ENCODE measurements at regions of chr17 and their contacts with region 1.

Region 1: GRCh38 chr17:33725675-33726271 is 432.7 kb upstream of the ASIC2 start:
- DNase-seq: peak; percentile 36 to 88
- H3K4me3 ChIP-seq: no peak overlapping the region
- H3K27ac ChIP-seq: no peak overlapping the region
- H3K4me1 ChIP-seq: no peaks in the 10 kb centered on the region
- H3K27me3 ChIP-seq: no peaks in the 10 kb centered on the region; a peak in 1 of 7 replicates
- CTCF ChIP-seq: peak; percentile 83 to 96 (median 91)
- EP300 ChIP-seq: no peak
- POLR2A ChIP-seq: no peak
- RAD21 ChIP-seq: peak; percentile 94 to 97

Region 2: DNA sequence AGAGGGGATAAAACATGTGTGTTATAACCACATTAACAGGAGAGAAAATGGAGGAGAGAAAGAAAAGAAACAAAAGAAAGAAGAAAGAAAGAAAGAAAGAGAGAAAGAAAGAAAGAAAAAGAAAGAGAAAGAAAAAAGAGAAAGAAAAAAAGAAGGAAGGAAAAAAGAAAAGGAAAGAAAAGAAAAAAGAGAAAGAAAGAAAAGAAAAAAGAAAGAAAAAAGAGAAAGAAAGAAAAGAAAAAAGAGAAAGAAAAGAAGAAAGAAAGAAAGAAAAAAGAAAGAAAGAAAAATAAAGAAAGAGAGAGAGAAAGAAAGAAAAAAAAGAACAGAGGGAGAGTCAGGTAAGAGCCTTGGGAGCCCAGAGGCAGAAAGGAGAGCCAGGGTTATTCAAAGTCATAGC is 13.9 kb after region 1 on chr17:
- CTCF ChIA-PET with region 1: interaction called, 34 read pairs
- POLR2A ChIA-PET with region 1: no interaction called
- DNase-seq: no peak
- H3K4me3 ChIP-seq: no peak overlapping the region
- H3K27ac ChIP-seq: no peak overlapping the region
- H3K4me1 ChIP-seq: no peaks in the 10 kb centered on the region
- H3K27me3 ChIP-seq: no peaks in the 10 kb centered on the region; a peak in 2 of 7 replicates
- CTCF ChIP-seq: no peak
- EP300 ChIP-seq: no peak
- POLR2A ChIP-seq: no peak
- RAD21 ChIP-seq: no peak

Region 3: DNA sequence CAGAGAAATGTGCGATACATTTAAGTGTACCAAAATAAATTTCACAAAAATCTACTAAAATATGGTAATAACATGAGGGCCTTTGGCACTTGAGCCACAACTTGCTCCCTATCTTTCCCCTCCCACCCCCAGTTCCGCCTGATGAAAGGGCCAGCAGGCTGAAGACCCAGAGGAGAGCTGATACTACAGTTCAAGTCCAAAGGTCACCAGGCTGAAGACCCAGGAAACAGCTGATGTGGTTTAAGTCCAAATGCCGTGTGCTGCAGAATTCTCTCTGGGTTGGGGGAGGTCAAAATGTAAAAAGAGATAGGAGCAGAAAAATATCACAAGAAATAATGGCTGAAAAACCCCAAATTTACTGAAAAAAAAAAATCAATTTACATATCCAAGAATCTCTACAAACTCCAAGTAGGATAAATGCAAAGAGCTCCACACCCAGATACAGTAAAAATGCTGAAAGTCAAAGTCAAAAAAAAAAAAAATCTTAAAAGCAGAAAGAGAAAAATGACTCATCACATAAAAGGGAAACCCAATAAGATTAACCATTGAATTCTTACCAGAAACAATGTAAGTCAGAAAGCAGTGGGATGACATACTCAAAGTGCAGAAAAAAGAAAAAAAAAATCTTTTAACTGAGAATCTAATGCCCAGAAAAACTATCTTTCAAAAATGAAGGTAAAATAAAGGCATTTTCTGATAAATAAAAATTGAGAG is 19.4 kb after region 1 on chr17:
- CTCF ChIA-PET with region 1: interaction called, 52 read pairs
- POLR2A ChIA-PET with region 1: no interaction called
- DNase-seq: no peak
- H3K4me3 ChIP-seq: no peak overlapping the region
- H3K27ac ChIP-seq: no peak overlapping the region
- H3K4me1 ChIP-seq: peaks cover 3 to 5% (median 4%) of the 10 kb centered on the region in 4 experiments; a peak in 6 of 7 replicates
- H3K27me3 ChIP-seq: peaks cover 5 to 23% (median 15%) of the 10 kb centered on the region in 4 experiments
- CTCF ChIP-seq: no peak
- EP300 ChIP-seq: no peak
- POLR2A ChIP-seq: no peak
- RAD21 ChIP-seq: no peak

Region 4: DNA sequence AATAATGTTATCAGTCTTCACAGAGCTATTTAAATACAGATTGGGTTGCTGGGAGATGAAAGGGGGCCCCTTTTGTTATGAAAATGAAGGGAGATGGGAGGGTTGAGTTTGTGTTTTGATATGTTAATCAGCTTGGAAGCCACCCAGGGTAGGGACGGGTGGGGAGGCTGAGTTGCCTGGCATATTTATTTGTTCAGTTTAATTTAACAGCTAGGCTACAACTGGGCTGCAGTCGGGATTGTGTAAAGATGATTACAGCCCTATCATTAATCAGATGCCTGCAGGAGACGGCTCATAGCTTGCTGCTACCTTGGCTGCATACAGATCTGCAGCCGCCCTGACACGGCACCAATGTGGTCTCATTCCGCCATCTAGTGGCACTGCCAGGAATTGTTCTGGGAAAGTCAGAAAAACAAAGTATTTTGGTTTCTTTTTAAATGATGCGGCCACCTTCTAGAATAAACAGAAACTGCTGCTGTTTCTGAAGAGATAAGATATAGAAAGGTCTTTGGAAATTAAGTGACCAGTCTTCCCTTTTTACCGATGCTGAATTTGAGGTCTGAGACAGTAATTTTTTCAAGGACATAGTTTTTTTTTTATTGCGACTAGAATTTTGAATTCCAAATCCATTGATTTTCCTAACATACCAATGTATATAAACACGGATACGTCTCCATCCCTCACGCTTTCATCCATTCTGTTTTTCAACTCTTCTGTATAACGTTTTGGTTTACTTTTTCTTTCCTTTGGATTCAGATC is 25.3 kb after region 1 on chr17:
- CTCF ChIA-PET with region 1: interaction called, 52 read pairs
- POLR2A ChIA-PET with region 1: interaction called, 3 read pairs
- DNase-seq: peak; percentile 47 to 89
- H3K4me3 ChIP-seq: peak overlapping the region in 1 of 4 experiments; percentile 51; a peak in 2 of 8 replicates
- H3K27ac ChIP-seq: no peak overlapping the region
- H3K4me1 ChIP-seq: peaks cover 5 to 13% (median 8%) of the 10 kb centered on the region in 4 experiments
- H3K27me3 ChIP-seq: peaks cover 5 to 23% (median 16%) of the 10 kb centered on the region in 4 experiments
- CTCF ChIP-seq: peak; percentile 69 to 84 (median 72)
- EP300 ChIP-seq: no peak
- POLR2A ChIP-seq: no peak
- RAD21 ChIP-seq: peak; percentile 88 to 94

Region 5: GRCh38 chr17:33769066-33769465 is 43.3 kb after region 1 on chr17:
- CTCF ChIA-PET with region 1: interaction called, 10 read pairs
- POLR2A ChIA-PET with region 1: no interaction called
- DNase-seq: no peak
- H3K4me3 ChIP-seq: no peak overlapping the region
- H3K27ac ChIP-seq: no peak overlapping the region
- H3K4me1 ChIP-seq: peaks cover 0 to 4% (median 0%) of the 10 kb centered on the region in 4 experiments; a peak in 1 of 7 replicates
- H3K27me3 ChIP-seq: no peaks in the 10 kb centered on the region
- CTCF ChIP-seq: no peak
- EP300 ChIP-seq: no peak
- POLR2A ChIP-seq: no peak
- RAD21 ChIP-seq: no peak

Region 6: DNA sequence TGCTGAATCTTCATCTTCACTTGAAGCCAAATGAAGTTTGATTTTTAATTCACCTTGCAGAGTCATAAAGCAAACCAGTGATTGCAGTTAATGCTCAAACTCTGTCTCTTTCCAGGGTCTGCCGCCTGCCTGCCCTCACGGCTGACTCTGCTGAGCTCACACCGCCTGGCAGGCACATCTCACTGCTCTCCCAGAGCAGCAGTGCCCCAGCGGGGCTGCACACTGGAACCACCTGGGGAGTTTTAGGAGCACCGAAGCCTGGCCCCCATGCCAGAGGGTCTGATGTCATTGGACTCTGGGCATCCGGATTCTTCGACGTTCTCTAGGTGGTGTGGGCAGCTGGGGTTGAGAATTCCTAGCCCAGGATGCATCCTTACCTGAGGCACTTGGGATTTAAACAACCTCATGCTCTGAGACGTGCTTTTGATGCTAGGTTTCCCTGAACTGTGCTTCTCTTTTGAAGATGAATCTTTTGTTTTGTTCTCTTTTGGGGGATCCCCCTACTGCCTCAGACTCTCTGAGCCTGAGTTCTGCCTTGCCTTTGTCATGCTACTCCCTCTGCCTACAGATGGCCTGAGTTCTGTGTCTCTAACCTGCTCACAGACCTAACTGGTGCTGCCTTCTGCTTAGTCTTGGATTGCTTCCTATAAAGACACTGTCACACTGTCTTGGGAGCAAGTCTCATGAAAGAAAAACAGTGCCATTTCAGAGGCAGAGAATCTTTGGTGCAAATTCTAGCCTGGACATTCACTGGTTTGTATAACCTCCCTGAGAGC is 91.3 kb after region 1 on chr17:
- CTCF ChIA-PET with region 1: no interaction called
- POLR2A ChIA-PET with region 1: no interaction called
- DNase-seq: no peak
- H3K4me3 ChIP-seq: no peak overlapping the region
- H3K27ac ChIP-seq: no peak overlapping the region
- H3K4me1 ChIP-seq: peaks cover 0 to 4% (median 0%) of the 10 kb centered on the region in 4 experiments; a peak in 1 of 7 replicates
- H3K27me3 ChIP-seq: peaks cover 0 to 3% (median 0%) of the 10 kb centered on the region in 4 experiments; a peak in 1 of 7 replicates
- CTCF ChIP-seq: no peak
- EP300 ChIP-seq: no peak
- POLR2A ChIP-seq: no peak
- RAD21 ChIP-seq: no peak

Region 7: DNA sequence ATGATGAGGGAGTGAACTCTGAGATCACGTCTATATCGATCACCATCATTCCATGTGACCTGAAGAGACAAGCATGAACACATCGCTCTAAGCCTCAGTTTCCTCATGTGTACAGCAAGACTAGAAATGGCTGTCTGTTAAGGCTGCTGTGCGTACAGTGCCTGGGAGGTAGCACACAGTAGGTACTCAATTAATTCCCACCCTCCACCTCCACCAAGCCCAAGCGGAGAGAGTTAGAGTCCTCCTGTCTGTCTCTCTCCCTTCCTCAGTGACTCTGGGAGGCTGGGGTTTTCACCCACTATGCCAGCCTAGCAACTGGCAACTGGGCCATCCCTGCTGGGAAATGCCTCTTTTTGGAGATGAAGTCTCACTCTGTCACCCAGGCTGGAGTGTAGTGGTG is 211.0 kb after region 1 on chr17:
- CTCF ChIA-PET with region 1: no interaction called
- POLR2A ChIA-PET with region 1: no interaction called
- DNase-seq: no peak
- H3K4me3 ChIP-seq: no peak overlapping the region
- H3K27ac ChIP-seq: no peak overlapping the region
- H3K4me1 ChIP-seq: no peaks in the 10 kb centered on the region; a peak in 1 of 7 replicates
- H3K27me3 ChIP-seq: no peaks in the 10 kb centered on the region; a peak in 1 of 7 replicates
- CTCF ChIP-seq: no peak
- EP300 ChIP-seq: no peak
- POLR2A ChIP-seq: no peak
- RAD21 ChIP-seq: no peak

Region 8: DNA sequence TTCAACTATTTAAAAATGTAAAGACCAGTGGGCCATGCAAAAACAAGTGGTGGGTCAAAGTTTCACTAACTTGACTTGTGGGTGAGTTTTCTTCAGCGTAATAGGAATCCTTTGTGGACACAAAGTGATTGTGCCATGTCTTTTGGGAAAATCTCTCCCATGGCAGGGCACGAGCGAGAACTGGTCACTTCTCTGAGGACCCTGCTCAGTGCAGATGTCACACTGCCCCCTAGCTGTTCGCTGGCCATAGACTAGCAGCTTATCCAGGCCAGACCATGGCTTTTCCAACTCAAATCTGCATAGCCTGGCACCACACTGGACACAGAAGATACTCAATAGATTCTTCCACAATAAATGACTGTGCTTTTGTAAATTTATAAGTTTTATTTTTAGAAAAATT is 223.3 kb after region 1 on chr17:
- CTCF ChIA-PET with region 1: interaction called, 22 read pairs
- POLR2A ChIA-PET with region 1: no interaction called
- DNase-seq: peak; percentile 25 to 73
- H3K4me3 ChIP-seq: no peak overlapping the region
- H3K27ac ChIP-seq: no peak overlapping the region
- H3K4me1 ChIP-seq: no peaks in the 10 kb centered on the region
- H3K27me3 ChIP-seq: no peaks in the 10 kb centered on the region
- CTCF ChIP-seq: peak; percentile 82 to 92 (median 92)
- EP300 ChIP-seq: no peak
- POLR2A ChIP-seq: no peak
- RAD21 ChIP-seq: peak; percentile 84 to 88

Measured in H1 (cell line).